ENCODE measurements at regions of chr3 and their contacts with region 1.

Region 1: GRCh38 chr3:189507856-189508255 is 123.3 kb upstream of the TP63 start:
- DNase-seq: no peak
- H3K27ac ChIP-seq: no peak overlapping the region
- CTCF ChIP-seq: no peak

Region 2: DNA sequence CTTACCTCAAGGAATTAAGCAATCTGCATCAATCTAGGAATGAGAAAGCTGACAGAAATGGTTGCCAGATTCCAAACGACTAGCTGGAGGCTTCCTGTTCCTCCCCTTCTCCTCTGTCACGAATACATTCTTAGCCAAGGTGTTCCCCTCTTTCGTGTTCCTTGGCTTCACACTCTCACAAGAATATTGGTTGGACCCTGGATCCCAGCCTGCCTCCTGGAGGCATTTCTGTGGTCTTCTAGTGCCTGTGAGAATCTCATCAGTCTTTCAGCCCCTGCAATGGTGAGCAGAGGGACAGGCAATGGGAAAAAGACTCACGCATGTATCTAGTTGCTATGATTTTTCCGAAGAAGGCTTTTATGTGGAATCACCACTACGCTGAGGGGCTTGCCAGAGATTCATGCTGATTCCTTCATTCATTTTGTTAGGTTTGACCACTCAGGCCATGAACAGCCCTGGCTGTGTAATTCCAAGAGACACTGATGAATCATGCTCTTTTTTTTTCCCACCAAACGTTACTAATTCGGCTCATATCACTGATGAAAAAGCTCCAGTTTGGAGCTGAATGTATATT is 614.4 kb after region 1 on chr3:
- CTCF ChIA-PET with region 1: no interaction called
- POLR2A ChIA-PET with region 1: interaction called, 10 read pairs
- DNase-seq: no peak
- H3K27ac ChIP-seq: no peak overlapping the region
- CTCF ChIP-seq: no peak